ENCODE measurements at regions of chr12 and their contacts with region 1.

Region 1: GRCh38 chr12:14514154-14514842 is 53.4 kb downstream of the PLBD1 start:
- DNase-seq: peak; percentile 71
- ATAC-seq: peak; percentile 93
- H3K4me3 ChIP-seq: no peak overlapping the region
- H3K27ac ChIP-seq: no peak overlapping the region
- H3K4me1 ChIP-seq: peaks cover 9 to 12% of the 10 kb centered on the region in 2 experiments; a peak in 3 of 4 replicates
- H3K27me3 ChIP-seq: no peaks in the 10 kb centered on the region
- CTCF ChIP-seq: peak; percentile 56 to 74 (median 72); a peak in 5 of 6 replicates
- POLR2A ChIP-seq: no peak
- RAD21 ChIP-seq: peak; percentile 80

Region 2: DNA sequence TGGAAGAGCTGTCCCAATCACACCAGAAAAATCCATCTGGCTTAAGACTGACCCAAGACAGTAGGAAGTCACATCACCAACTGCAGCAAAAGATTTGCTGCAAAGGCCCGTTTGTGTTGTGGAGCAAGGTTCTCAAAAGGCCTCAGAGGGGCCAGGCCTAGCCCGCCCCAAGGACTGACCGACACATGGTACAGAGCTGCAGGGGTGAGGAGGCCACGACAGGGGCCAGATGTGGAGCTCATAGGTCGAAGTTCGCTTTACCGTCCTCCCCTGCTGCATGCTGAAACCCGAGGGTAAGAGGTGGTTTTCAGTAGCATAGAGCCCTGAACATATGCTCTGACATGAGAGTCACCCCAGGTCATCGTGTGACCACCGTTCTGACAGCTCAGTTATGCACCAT is 17.9 kb after region 1 on chr12:
- CTCF ChIA-PET with region 1: no interaction called
- POLR2A ChIA-PET with region 1: no interaction called
- RAD21 ChIA-PET with region 1: no interaction called
- intact Hi-C with region 1: no loop called
- DNase-seq: no peak
- ATAC-seq: no peak
- H3K4me3 ChIP-seq: no peak overlapping the region
- H3K27ac ChIP-seq: no peak overlapping the region
- H3K4me1 ChIP-seq: no peaks in the 10 kb centered on the region
- H3K27me3 ChIP-seq: no peaks in the 10 kb centered on the region
- CTCF ChIP-seq: no peak
- POLR2A ChIP-seq: no peak
- RAD21 ChIP-seq: no peak

Region 3: GRCh38 chr12:14618983-14619382 is 104.7 kb after region 1 on chr12:
- CTCF ChIA-PET with region 1: interaction called, 6 read pairs
- POLR2A ChIA-PET with region 1: no interaction called
- RAD21 ChIA-PET with region 1: no interaction called
- intact Hi-C with region 1: loop called (anchors 1 kb)
- DNase-seq: no peak
- ATAC-seq: peak; percentile 67; the same call in 1 of the 2 replicates
- H3K4me3 ChIP-seq: no peak overlapping the region
- H3K27ac ChIP-seq: no peak overlapping the region
- H3K4me1 ChIP-seq: no peaks in the 10 kb centered on the region
- H3K27me3 ChIP-seq: no peaks in the 10 kb centered on the region
- CTCF ChIP-seq: peak; percentile 30 to 47 (median 46); a peak in 4 of 6 replicates
- POLR2A ChIP-seq: no peak
- RAD21 ChIP-seq: peak; percentile 58

Region 4: DNA sequence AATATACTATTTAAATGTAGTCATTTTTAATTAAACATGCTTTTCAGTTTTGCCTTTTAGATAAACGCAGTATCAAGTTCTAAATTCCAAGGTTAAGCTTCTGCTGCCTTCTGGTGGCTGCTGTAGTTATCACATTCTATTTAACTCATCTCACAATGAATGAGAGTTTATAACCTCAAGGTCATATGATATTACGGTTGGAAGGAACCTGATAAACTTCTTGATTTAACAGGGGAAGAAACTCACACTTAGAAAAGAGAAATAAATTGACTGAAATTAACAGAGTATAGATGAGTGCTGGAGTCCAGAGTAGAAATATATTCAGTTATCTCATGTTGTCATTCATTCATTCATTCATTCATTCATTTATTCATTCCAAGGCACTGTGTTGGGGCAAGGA is 150.2 kb after region 1 on chr12:
- CTCF ChIA-PET with region 1: interaction called, 4 read pairs
- POLR2A ChIA-PET with region 1: no interaction called
- RAD21 ChIA-PET with region 1: no interaction called
- intact Hi-C with region 1: loop called (anchors 1 kb)
- DNase-seq: peak; percentile 37
- ATAC-seq: peak; percentile 75
- H3K4me3 ChIP-seq: no peak overlapping the region
- H3K27ac ChIP-seq: no peak overlapping the region
- H3K4me1 ChIP-seq: no peaks in the 10 kb centered on the region
- H3K27me3 ChIP-seq: no peaks in the 10 kb centered on the region
- CTCF ChIP-seq: peak; percentile 42 to 78 (median 68); a peak in 5 of 6 replicates
- POLR2A ChIP-seq: no peak
- RAD21 ChIP-seq: peak; percentile 84